ENCODE measurements at regions of chr20 and their contacts with region 1.

Region 1: GRCh38 chr20:32123088-32123487 is 13.6 kb downstream of the TM9SF4 start:
- DNase-seq: no peak
- ATAC-seq: no peak
- H3K4me3 ChIP-seq: no peak overlapping the region
- H3K27ac ChIP-seq: no peak overlapping the region
- H3K4me1 ChIP-seq: no peaks in the 10 kb centered on the region
- H3K27me3 ChIP-seq: no peaks in the 10 kb centered on the region
- CTCF ChIP-seq: no peak

Region 2: DNA sequence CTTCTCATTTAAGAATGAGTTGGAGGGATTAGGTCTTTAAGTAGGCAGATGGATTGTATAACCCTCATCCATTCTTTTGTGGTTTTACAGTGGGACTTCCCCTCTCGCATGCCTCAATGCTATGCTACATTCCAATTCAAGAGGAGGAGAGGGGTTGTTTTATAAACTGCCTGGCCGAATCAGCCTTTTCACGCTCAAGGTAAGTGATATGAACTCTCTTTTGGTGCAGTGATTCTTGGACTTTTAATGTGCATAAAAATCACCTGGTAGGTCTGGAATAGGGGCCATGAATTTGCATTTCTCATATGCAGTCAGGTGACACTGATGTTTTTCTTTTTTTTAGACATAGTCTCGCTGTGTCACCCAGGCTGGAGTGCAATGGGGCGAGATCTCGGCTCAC is 245.8 kb after region 1 on chr20:
- CTCF ChIA-PET with region 1: interaction called, 11 read pairs
- POLR2A ChIA-PET with region 1: interaction called, 3 read pairs
- in situ Hi-C with region 1: no loop called
- intact Hi-C with region 1: no loop called
- DNase-seq: no peak
- ATAC-seq: no peak
- H3K4me3 ChIP-seq: no peak overlapping the region
- H3K27ac ChIP-seq: no peak overlapping the region
- H3K4me1 ChIP-seq: peaks cover 25% of the 10 kb centered on the region
- H3K27me3 ChIP-seq: no peaks in the 10 kb centered on the region
- CTCF ChIP-seq: no peak

Measured in Panc1 (cell line).